ENCODE measurements at regions of chr6 and their contacts with region 1.

Region 1: DNA sequence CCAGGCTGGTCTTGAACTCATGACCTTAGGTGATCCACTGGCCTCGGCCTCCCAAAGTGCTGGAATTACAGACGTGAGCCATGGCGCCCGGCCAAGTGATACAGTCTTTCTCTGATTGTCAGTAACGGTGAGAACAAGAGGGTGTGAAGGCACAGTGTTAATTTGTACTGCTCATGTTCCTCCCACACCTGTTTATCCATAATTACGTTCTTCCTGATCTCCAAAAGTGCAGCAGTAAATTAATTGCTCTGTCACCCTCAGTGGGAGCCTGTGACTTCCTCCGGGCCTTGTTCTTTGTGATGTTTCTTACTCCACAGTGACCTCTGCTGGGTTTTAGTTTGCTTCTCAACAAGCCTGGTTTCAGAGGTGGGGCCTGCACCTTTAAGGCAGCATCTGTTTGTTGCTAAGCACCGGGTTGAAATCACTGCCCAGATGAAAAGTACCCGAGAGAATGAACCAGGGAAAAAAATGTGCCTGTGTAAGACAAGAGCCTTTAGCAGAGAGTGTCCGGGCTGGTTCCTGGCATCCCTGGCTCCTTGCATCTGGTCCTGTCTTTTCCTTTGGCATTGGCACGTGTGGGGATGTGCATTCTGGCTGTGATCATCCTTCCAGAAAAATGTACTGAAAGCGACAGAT is 89.1 kb upstream of the CLDN20 start:
- DNase-seq: peak; percentile 77
- ATAC-seq: peak; percentile 58
- H3K4me3 Mint-ChIP-seq: no peak overlapping the region
- H3K27ac Mint-ChIP-seq: peak overlapping the region; percentile 73
- H3K4me1 Mint-ChIP-seq: peaks cover 50% of the 10 kb centered on the region
- H3K27me3 Mint-ChIP-seq: no peaks in the 10 kb centered on the region

Region 2: GRCh38 chr6:154868143-154868594 is 306.5 kb before region 1 on chr6:
- CTCF ChIA-PET with region 1: interaction called, 9 read pairs
- POLR2A ChIA-PET with region 1: interaction called, 3 read pairs
- intact Hi-C with region 1: loop called (anchors 1 to 5 kb)
- DNase-seq: peak; percentile 16
- ATAC-seq: peak; percentile 85
- H3K4me3 Mint-ChIP-seq: no peak overlapping the region
- H3K27ac Mint-ChIP-seq: no peak overlapping the region
- H3K4me1 Mint-ChIP-seq: peaks cover 24% of the 10 kb centered on the region
- H3K27me3 Mint-ChIP-seq: no peaks in the 10 kb centered on the region

Region 3: GRCh38 chr6:155115893-155116570 is 58.7 kb before region 1 on chr6:
- CTCF ChIA-PET with region 1: interaction called, 3 read pairs
- POLR2A ChIA-PET with region 1: interaction called, 3 read pairs
- intact Hi-C with region 1: loop called (anchors 1 kb)
- DNase-seq: no peak
- ATAC-seq: peak; percentile 94
- H3K4me3 Mint-ChIP-seq: peak overlapping the region; percentile 5
- H3K27ac Mint-ChIP-seq: peak overlapping the region; percentile 70
- H3K4me1 Mint-ChIP-seq: peaks cover 27% of the 10 kb centered on the region
- H3K27me3 Mint-ChIP-seq: peaks cover 3% of the 10 kb centered on the region

Region 4: DNA sequence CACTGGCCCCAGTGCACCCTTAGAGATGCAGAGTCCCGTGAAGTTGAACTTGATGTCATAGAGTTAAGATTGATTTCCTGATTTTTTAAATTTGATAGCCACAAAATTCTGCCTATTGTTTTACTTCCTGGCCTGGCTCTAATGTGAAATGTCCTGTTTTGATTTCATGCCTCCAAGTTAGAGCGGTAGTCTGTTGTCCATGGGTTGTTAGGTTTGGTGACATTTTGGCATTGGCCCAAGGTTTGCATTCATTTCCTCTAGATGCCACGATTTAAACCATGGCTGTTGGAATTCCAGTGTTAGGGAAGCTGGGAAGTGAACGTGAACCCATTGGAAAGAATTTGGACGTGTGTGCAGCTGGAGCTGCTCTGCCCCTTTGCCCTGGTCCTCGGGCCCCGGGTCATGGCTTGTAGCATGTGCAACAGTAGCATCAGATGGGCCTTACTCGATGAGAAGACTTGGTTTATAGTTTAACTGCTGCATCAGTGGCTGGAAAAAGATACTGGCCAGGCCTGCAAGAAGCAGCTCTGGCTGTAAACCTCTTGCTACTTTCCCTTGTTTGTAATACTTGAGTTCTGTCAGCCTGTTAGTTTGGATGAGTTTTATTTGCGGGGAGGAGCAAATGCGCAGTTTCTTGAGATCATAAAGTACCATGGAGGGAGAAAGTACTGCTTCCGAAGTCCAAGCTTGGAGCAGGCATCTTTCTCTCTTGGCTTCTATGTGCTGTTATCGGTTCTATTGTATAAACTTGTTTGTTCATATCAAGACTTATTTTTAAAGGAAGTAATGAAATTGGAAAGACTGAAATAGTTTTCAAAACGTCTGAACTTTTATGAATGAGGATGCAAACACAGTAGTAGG is 32.3 kb before region 1 on chr6:
- CTCF ChIA-PET with region 1: no interaction called
- POLR2A ChIA-PET with region 1: no interaction called
- intact Hi-C with region 1: no loop called
- DNase-seq: no peak
- ATAC-seq: no peak
- H3K4me3 Mint-ChIP-seq: peak overlapping the region; percentile 65
- H3K27ac Mint-ChIP-seq: peak overlapping the region; percentile 92
- H3K4me1 Mint-ChIP-seq: peaks cover 28% of the 10 kb centered on the region
- H3K27me3 Mint-ChIP-seq: no peaks in the 10 kb centered on the region

Region 5: GRCh38 chr6:155223646-155224451 is 49.2 kb after region 1 on chr6:
- CTCF ChIA-PET with region 1: interaction called, 4 read pairs
- POLR2A ChIA-PET with region 1: no interaction called
- intact Hi-C with region 1: loop called (anchors 1 kb)
- DNase-seq: peak; percentile 79
- ATAC-seq: peak; percentile 99
- H3K4me3 Mint-ChIP-seq: peak overlapping the region; percentile 10
- H3K27ac Mint-ChIP-seq: peak overlapping the region; percentile 79
- H3K4me1 Mint-ChIP-seq: peaks cover 18% of the 10 kb centered on the region
- H3K27me3 Mint-ChIP-seq: peaks cover 3% of the 10 kb centered on the region

Region 6: DNA sequence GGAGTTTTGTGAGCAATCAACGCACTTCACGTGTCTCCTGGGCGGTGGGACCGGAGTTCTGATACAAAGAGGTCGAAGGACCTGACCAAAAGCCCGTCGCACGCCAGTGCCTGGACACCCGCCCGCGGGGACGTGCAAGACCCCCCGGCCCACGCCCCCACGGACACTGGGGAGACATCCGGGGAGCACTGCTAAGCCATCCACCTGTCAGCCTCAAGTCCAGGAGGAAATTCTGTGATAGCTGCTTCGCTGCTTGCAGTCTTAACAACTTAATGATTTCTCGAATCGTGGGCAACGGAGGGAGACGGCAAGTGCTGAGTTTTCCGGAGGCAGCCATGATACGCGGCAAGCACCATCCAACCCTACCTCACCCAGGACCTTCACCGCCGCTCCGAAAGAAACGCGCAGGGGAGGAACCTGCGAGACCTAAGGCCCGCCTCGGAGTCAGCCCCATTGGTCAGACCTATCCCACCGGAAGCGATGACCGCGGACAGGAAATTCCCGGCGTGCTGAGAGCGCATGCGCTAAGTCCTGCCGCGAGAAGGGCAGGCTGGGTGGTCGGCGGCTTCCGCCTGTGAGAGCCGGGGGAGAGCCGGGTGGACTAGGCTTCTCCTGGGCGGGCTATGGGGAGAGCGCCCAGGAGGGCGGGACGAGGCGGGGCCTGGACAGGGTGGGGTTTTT is 139.5 kb after region 1 on chr6 and contains the start of gene TFB1M:
- CTCF ChIA-PET with region 1: interaction called, 25 read pairs
- POLR2A ChIA-PET with region 1: no interaction called
- intact Hi-C with region 1: loop called (anchors 1 to 2 kb)
- DNase-seq: peak; percentile 99
- ATAC-seq: peak; percentile 95
- H3K4me3 Mint-ChIP-seq: peak within 1 kb of the TSS; percentile 90
- H3K27ac Mint-ChIP-seq: peak within 1 kb of the TSS; percentile 98
- H3K4me1 Mint-ChIP-seq: peaks cover 39% of the 10 kb centered on the region
- H3K27me3 Mint-ChIP-seq: no peaks in the 10 kb centered on the region
- total RNA-seq, gene TFB1M: 45.5 to 56.4 TPM